ENCODE measurements at regions of chr17 and their contacts with region 1.

Region 1: GRCh38 chr17:78745407-78746088 is 36.5 kb downstream of the CYTH1 start:
- DNase-seq: peak in 8 of 10 donors; percentile 37 to 77 (median 58)
- ATAC-seq: no peak
- H3K4me3 Mint-ChIP-seq: peak overlapping the region; percentile 46 to 85 (median 80)
- H3K27ac Mint-ChIP-seq: peak overlapping the region; percentile 92 to 98 (median 96)
- H3K4me1 Mint-ChIP-seq: peaks cover 51 to 94% (median 92%) of the 10 kb centered on the region in 4 donors
- H3K27me3 Mint-ChIP-seq: no peaks in the 10 kb centered on the region

Region 2: DNA sequence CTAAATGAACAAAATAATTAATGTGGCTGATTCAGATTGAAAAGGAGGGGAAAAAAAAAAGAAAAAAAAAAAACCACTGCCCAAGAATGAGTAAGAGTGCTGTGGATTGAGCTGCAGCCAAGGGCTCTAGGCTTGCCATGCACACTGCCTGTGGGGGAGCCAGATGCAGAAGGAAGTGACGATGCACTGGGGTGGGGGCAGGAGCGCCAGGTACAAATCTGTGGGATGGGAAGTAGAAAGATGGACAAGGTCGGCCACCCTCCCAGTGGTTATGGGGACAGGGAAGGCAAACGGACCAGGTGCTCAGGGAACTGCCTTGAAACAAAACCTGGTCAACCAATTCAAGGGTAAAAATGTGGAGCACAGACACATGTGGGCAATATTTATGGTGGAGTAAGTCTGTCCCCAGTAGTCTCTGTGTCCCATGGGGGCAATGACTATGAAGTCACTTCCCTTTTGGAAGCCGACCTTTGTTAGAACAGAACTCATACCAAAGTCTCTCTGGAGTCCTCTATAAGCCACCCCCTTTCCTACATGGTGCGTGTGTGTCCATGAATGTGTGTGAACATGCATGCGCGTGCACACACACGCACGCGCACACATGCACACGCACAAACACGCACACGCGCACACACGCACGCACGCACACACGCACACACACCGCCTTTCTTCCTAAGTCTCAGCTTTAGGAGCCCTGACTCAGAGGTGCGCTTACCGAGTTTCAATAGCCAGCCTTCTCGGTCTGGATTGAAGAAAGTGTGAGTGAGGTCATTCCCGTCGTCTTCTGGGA is 47.8 kb before region 1 on chr17:
- POLR2A ChIA-PET with region 1: no interaction called
- DNase-seq: no peak
- ATAC-seq: peak in 1 of 2 donors; percentile 16
- H3K4me3 Mint-ChIP-seq: peak overlapping the region in 2 of 10 donors; percentile 50 to 79
- H3K27ac Mint-ChIP-seq: peak overlapping the region; percentile 57 to 90 (median 76)
- H3K4me1 Mint-ChIP-seq: peaks cover 11 to 18% (median 14%) of the 10 kb centered on the region in 4 donors
- H3K27me3 Mint-ChIP-seq: no peaks in the 10 kb centered on the region

Region 3: DNA sequence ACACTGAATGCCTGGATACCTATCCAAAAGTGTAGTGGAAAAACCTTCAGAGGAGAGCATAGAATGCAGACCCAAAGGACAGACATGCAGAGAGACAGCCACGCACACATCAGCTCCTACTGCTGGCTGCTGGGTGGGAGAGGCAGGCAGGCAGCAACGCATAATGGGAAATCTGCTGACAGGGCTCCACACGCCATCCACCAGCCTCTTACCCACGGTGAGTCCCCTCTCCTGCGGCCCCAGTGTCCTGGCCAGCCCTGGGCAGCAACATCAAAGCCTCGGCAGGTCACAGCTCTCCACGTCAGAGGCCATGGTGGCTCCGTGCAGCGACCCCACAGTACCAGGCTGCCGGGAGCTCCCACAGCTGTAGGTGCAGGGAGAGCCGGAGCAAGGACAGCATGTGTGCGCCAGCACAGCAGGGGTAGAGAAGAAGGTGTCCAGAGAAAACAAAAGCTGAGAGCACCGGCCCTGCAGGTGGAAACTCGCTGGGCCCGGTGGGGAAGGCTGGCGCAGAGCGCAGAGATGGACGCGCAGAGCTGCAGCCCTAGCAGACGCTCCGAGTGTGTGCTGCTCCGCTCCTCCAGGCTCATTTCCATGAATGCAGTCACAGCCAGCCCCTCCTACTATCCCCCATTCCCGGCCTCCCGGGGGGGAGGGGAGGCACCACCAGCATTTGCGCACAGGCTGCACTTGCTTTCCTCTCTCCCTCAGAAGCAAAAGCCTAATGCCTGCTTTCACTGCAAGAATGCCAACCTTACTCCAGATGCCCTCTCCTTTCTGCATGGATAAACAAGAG is 22.3 kb before region 1 on chr17:
- POLR2A ChIA-PET with region 1: interaction called, 14 read pairs
- DNase-seq: no peak
- ATAC-seq: no peak
- H3K4me3 Mint-ChIP-seq: peak overlapping the region; percentile 45 to 83 (median 76)
- H3K27ac Mint-ChIP-seq: peak overlapping the region; percentile 67 to 96 (median 90)
- H3K4me1 Mint-ChIP-seq: peaks cover 69 to 98% (median 95%) of the 10 kb centered on the region in 4 donors
- H3K27me3 Mint-ChIP-seq: no peaks in the 10 kb centered on the region

Region 4: DNA sequence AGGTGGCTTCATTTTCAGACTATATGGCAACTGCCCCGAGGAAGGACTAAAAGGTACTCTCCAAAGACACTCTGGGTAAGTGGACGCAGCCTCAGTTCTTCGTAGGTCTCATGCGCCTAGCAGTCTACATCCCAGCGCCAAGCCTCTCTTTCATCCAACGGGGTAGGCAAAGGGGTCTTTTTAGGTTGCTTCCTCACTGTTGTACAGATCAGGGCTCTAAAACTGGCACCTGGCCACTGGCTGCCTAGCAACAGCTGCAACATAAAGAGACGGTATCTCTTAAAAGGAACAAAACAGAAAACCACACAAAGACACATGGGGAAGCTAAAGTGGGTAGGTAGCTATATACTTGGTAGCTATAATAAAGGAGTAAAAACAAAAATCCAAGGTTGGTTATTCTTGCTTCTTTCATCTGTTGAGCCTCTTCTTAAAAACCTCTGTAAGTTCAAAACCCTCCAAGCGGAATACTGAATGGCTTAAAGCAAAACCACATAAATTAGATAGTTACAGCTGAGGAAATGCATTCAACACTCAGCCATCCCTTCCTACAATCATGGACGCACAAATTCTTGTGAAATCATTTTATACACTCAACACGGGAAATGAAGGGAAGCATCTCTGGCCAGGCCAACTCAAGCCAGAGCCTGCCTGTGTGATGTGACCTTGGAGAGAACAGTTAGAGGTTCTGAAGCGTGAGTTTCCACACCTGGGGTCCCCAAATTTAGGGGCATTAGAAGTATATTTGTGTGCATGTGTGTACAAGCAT is 13.8 kb after region 1 on chr17:
- POLR2A ChIA-PET with region 1: interaction called, 54 read pairs
- DNase-seq: peak; percentile 68 to 97 (median 90)
- ATAC-seq: peak; percentile 75 to 87
- H3K4me3 Mint-ChIP-seq: peak overlapping the region; percentile 61 to 88 (median 79)
- H3K27ac Mint-ChIP-seq: peak overlapping the region; percentile 90 to 99 (median 98)
- H3K4me1 Mint-ChIP-seq: peaks cover 26 to 90% (median 76%) of the 10 kb centered on the region in 4 donors
- H3K27me3 Mint-ChIP-seq: no peaks in the 10 kb centered on the region

Region 5: DNA sequence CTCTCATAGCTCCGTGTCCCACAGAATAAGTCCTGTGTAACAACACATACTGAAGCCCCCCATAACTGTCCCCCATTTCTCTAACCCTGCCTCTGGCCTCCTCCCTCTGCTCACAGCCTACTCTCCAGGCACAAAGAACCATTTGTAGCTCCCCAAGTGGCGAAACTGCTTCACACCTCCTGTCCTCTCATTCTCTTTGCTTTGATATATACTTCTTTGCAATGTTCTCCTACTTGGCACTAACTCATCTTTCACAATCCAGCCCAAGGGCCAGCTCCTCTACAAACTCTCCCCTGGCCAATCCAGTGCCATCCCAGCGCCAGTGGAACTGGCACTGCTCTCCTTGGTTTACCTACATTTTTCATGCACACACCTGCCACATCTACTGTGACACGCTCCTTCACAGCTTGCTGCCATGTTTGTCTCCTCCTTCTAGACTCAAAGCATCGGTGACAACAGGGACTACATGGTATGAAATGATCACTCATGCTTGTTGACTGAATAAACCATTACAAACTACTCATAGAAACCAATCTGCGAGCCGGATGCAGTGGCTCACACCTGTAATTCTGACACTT is 23.7 kb after region 1 on chr17:
- POLR2A ChIA-PET with region 1: interaction called, 26 read pairs
- DNase-seq: peak in 1 of 10 donors; percentile 45
- ATAC-seq: peak; percentile 18 to 66
- H3K4me3 Mint-ChIP-seq: no peak overlapping the region
- H3K27ac Mint-ChIP-seq: no peak overlapping the region
- H3K4me1 Mint-ChIP-seq: peaks cover 23 to 42% (median 35%) of the 10 kb centered on the region in 4 donors
- H3K27me3 Mint-ChIP-seq: no peaks in the 10 kb centered on the region

Region 6: DNA sequence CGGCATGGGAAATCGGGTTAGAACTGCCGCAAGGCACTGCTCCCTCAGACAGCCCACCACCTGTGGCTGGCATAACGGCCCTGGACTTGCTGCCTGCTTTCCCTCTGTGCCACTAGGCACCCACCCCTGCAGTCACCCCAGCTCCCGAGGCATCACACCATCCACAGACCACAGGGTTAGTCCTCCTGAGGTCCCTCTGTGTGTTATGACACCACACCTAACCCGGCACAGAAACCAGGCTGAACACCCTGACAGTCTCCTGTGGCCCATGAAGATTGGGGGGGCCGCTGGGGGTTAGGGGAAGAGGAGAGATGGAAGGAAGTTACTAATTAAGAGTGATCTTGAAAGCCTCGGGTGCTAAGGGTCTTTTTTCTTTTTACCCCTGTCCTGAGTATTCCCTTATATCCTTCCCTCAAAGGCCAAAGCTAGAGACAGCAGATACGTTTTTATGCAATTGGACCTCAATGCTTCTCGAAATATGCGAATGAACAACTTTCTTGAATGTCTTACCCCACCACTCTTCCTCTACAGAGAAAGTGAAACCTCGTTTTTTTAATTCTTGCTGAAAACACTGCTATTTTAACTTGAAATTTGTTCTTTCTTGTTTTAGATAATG is 29.5 kb after region 1 on chr17:
- POLR2A ChIA-PET with region 1: interaction called, 40 read pairs
- DNase-seq: peak in 9 of 10 donors; percentile 41 to 80 (median 63)
- ATAC-seq: peak; percentile 50 to 55
- H3K4me3 Mint-ChIP-seq: peak overlapping the region; percentile 84 to 98 (median 91)
- H3K27ac Mint-ChIP-seq: peak overlapping the region in 8 of 10 donors; percentile 94 to 99 (median 98)
- H3K4me1 Mint-ChIP-seq: peaks cover 29 to 79% (median 68%) of the 10 kb centered on the region in 4 donors
- H3K27me3 Mint-ChIP-seq: no peaks in the 10 kb centered on the region

Region 7: GRCh38 chr17:78781948-78782916 is 36.7 kb after region 1 on chr17 and contains the start of gene CYTH1:
- POLR2A ChIA-PET with region 1: interaction called, 40 read pairs
- DNase-seq: peak; percentile 95 to 100 (median 98)
- ATAC-seq: peak; percentile 39 to 61
- H3K4me3 Mint-ChIP-seq: peak within 1 kb of the TSS; percentile 88 to 98 (median 94)
- H3K27ac Mint-ChIP-seq: peak within 1 kb of the TSS; percentile 91 to 99 (median 95)
- H3K4me1 Mint-ChIP-seq: peaks cover 12 to 75% (median 55%) of the 10 kb centered on the region in 4 donors
- H3K27me3 Mint-ChIP-seq: no peaks in the 10 kb centered on the region
- polyA plus RNA-seq, gene CYTH1: 220 to 320 (median 243) TPM

Region 8: DNA sequence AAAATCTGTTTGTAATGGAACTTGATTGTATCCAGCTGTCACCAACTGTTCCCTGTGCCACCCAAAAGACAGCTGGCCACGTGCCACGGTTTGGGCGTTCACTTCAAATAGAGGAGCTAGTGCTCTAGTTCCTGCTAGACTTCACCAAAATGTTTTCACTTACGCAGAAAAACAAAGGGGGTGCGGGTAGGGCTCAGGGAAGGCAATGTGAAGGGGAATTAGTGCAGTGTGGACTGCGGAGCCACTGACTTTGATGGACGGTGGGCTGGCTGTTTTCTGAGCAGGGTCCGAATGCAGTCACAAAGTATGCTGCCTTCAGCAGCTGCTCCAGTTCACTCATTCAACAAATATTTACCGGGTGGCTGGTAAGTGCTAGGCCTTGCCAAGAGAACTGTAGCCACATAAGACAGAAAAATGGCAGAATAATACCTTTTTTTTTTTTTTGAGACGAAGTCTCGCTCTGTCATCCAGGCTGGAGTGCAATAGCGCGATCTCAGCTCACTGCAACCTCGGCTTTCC is 44.2 kb after region 1 on chr17:
- POLR2A ChIA-PET with region 1: interaction called, 14 read pairs
- DNase-seq: peak; percentile 49 to 91 (median 78)
- ATAC-seq: peak; percentile 81 to 86
- H3K4me3 Mint-ChIP-seq: peak overlapping the region; percentile 42 to 85 (median 69)
- H3K27ac Mint-ChIP-seq: peak overlapping the region; percentile 88 to 98 (median 98)
- H3K4me1 Mint-ChIP-seq: peaks cover 27 to 83% (median 79%) of the 10 kb centered on the region in 4 donors
- H3K27me3 Mint-ChIP-seq: no peaks in the 10 kb centered on the region

Region 9: GRCh38 chr17:79612468-79613194 is 867.1 kb after region 1 on chr17:
- POLR2A ChIA-PET with region 1: no interaction called
- DNase-seq: peak in 3 of 10 donors; percentile 19 to 28 (median 22)
- ATAC-seq: no peak
- H3K4me3 Mint-ChIP-seq: peak overlapping the region in 1 of 10 donors; percentile 20
- H3K27ac Mint-ChIP-seq: no peak overlapping the region
- H3K4me1 Mint-ChIP-seq: peaks cover 0 to 8% (median 4%) of the 10 kb centered on the region in 4 donors
- H3K27me3 Mint-ChIP-seq: peaks cover 17 to 72% (median 44%) of the 10 kb centered on the region in 5 donors